Activated T-helper 1 cell treated with anti-CD3 and anti-CD28 coated beads, Interleukin-12 subunit alpha, Interleukin-12 subunit beta, Interleukin-2, Interleukin-4 antibody, amounts not matched to agents 30 ng/mL and 10 ng/mL and 1 ng/mL, durations not matched to agents 14 hours and 24 hours and 36 hours (primary cell): ENCODE measurements at regions of chr12 and their contacts with region 1.

Region 1: DNA sequence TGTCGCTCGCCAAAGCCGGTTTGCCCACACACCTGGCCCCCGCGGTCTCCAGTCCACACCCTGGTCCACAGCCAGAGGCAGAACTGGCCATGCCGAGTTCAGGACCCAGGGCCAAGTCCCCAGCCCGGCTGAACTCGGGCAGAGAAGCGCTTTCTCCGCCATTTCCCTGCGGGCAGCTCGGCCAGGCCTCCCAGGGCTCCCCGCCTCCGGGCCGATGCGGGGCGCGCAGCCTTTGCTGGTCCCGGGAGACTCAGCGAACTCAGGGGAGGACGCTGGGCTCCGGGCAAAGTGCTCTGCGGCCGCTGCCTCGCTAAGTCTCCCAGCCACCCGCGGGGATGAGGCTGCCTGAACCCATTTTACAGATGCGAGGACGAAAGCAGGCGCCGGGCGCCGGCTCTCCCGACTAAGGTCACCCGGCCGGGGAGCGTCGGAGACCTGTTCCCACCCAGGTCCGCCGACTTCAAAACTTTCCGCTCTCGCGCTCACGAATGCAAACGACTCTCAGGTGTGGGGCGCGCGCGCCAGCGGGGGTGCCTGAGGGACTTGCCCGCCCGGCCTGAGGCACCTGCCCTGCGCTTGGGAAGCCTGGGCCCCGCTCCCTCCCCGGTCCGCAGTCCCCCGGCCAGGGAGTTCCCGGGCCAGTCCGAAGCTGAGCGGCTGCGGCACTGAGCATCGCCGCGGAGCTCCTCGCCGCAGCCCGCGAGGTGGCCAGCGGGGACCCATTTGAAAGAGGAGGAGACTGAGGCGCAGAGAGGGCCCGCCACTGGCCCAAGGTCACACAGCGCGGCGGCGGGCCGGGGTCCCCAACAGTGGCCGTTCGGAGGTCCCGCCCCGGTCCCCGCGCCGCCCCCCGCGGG is 627 bp downstream of the TESC start:
- DNase-seq: peak; percentile 17
- H3K4me3 Mint-ChIP-seq: peak overlapping the region; percentile 88
- H3K27ac Mint-ChIP-seq: peak overlapping the region; percentile 55
- H3K4me1 Mint-ChIP-seq: peaks cover 31% of the 10 kb centered on the region
- H3K27me3 Mint-ChIP-seq: peaks cover 19% of the 10 kb centered on the region

Region 2: DNA sequence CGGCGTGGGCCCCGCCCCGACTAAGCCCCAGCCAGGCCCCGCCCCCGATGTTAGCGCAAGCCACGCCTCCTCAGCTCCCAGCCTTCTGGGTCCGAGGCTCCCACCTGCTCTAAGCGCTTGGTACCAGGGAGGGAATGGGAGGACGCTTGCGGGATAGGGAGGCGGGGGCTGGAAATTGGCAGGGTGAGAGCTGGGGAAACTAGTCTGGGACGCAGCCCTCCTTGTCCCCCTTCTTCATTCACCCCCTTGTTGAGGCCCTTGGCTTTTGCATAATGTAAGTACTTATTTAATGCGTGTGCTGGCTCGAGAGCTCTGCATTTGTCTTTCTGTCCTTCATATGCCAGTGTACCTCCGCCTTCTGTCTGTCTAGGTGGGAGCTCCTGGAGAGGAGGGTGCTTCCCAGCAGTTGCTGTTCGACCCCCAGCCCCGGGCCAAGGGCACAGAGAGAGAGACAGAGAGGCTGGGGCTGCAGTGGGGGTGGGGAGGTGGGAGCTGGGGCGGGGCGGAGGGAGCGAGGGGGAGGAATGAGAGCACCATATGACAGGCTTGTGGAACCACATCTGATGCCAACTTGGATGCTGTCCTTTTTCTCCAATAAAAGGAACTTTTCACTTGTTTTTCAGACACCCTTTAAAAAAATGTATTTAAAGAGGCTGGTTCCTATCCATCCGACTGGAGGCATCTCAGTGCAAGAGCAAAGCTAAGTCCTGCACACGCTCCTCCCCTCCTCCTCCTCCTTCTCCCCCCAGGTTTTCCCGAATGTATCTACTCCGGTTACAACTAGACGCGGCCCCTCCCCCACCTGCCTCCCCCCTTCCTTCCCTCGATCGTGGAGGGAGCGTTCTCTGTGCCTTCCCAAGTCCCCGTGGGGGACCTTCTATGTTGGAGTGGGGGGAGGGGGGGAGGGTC is 565.0 kb before region 1 on chr12:
- intact Hi-C with region 1: loop called (anchors 10 kb)
- DNase-seq: peak; percentile 60
- H3K4me3 Mint-ChIP-seq: peak overlapping the region; percentile 89
- H3K27ac Mint-ChIP-seq: peak overlapping the region; percentile 75
- H3K4me1 Mint-ChIP-seq: peaks cover 41% of the 10 kb centered on the region
- H3K27me3 Mint-ChIP-seq: peaks cover 10% of the 10 kb centered on the region

Region 3: GRCh38 chr12:116818948-116819832 is 279.4 kb before region 1 on chr12:
- intact Hi-C with region 1: loop called (anchors 1 kb)
- DNase-seq: peak; percentile 85
- H3K4me3 Mint-ChIP-seq: peak overlapping the region; percentile 94
- H3K27ac Mint-ChIP-seq: peak overlapping the region; percentile 98
- H3K4me1 Mint-ChIP-seq: peaks cover 21% of the 10 kb centered on the region
- H3K27me3 Mint-ChIP-seq: peaks cover 9% of the 10 kb centered on the region

Region 4: DNA sequence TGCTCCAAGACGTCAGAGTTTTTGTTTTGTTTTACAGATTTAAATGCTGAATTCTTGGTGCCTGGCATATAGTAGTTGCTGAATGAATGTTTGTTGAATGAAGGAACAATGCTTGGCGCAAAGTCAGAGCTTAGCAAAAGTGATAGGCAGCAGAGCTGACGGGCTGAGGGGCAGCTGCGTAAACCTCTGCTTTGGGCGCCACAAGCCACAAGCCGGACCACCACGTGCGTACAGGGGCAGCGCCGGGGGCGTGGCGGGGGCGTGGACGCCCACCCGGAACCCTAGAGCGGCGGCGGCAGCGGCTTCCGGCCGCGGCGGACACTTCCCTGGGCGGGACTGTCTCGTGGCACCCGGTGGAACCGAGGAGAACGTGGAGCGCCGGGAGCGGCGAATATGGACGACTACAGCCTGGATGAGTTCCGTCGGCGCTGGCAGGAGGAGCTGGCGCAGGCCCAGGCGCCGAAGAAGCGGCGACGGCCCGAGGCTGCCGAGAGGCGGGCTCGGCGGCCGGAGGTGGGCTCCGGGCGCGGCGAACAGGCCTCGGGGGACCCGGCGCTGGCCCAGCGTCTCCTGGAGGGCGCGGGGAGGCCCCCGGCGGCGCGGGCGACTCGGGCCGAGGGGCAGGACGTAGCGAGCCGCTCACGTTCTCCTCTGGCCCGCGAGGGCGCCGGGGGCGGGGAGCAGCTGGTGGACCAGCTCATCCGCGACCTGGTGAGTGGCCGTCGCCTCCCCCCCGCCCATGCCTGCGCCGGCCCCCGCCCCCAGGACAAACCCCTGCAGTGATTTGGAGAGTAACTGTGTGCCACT is 187.7 kb before region 1 on chr12 and contains the start of gene FBXW8:
- intact Hi-C with region 1: no loop called
- DNase-seq: peak; percentile 62
- H3K4me3 Mint-ChIP-seq: peak within 1 kb of the TSS; percentile 95
- H3K27ac Mint-ChIP-seq: peak within 1 kb of the TSS; percentile 96
- H3K4me1 Mint-ChIP-seq: peaks cover 25% of the 10 kb centered on the region
- H3K27me3 Mint-ChIP-seq: peaks cover 19% of the 10 kb centered on the region
- total RNA-seq, gene FBXW8: 6.7 and 7.3 TPM in 2 replicates

Region 5: DNA sequence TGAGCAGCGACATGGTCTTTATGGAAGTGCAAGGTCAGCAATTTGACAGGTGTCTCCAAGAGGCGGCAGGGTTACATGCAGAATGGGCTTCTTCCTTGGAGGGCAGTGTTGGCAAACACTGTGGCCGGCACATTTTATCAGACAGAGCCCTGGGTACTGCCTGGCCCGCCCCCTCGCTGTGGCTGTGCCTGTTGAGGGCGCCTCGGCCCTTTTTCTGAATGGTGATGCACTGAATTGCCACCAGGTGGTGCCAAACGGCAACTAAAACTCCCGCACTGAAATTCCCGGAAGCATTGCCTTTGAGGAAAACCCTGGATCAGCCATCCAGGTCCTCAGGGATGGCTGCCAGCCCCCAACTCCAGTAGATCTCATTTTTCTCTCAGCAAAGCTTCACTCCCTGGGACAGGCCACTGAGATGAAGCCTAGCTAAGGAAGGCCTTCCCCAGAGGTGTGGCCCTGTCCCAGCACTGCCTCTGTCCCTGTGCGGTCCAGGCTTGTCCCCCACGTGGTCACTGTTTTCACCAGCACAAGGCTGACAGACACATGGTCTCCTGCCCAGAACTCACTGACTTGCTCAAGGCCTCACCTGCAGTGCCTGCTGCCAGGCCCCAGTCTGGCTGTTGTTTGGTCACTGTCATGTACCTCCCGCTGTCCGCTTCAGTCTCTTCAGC is 73.0 kb before region 1 on chr12:
- intact Hi-C with region 1: loop called (anchors 1 kb)
- DNase-seq: peak; percentile 23
- H3K4me3 Mint-ChIP-seq: no peak overlapping the region
- H3K27ac Mint-ChIP-seq: no peak overlapping the region
- H3K4me1 Mint-ChIP-seq: peaks cover 6% of the 10 kb centered on the region
- H3K27me3 Mint-ChIP-seq: no peaks in the 10 kb centered on the region

Region 6: GRCh38 chr12:117119592-117120198 is 21.1 kb after region 1 on chr12:
- intact Hi-C with region 1: no loop called
- DNase-seq: peak; percentile 8
- H3K4me3 Mint-ChIP-seq: no peak overlapping the region
- H3K27ac Mint-ChIP-seq: no peak overlapping the region
- H3K4me1 Mint-ChIP-seq: peaks cover under 1% of the 10 kb centered on the region
- H3K27me3 Mint-ChIP-seq: peaks cover 1% of the 10 kb centered on the region

Region 7: DNA sequence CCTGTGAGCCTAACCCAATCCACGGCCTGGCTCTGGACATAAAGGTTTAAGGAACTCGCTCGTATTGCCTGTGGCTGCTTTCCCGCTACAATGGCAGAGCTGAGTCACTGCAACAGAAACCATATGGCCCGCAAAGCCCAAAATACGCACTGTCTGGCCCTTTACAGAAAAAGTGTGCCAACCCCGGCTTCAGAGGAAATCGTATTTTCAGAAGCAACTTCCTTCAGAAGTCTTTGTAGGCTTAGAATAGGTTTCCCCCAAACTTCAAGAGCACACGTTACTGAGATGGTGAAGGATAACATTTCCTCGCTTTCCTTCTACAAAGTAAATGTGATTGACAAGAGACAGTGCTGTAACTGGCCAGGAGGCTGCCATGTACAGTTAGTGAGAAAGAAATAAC is 35.5 kb after region 1 on chr12:
- intact Hi-C with region 1: loop called (anchors 1 kb)
- DNase-seq: peak; percentile 59
- H3K4me3 Mint-ChIP-seq: peak overlapping the region; percentile 20
- H3K27ac Mint-ChIP-seq: peak overlapping the region; percentile 87
- H3K4me1 Mint-ChIP-seq: peaks cover 11% of the 10 kb centered on the region
- H3K27me3 Mint-ChIP-seq: peaks cover 5% of the 10 kb centered on the region